ENCODE measurements at regions of chr4 and their contacts with region 1.

Region 1: GRCh38 chr4:53592686-53593501 is 1.6 kb upstream of the LNX1 start:
- DNase-seq: no peak
- H3K4me3 ChIP-seq: no peak overlapping the region
- H3K27ac ChIP-seq: no peak overlapping the region
- H3K4me1 ChIP-seq: no peaks in the 10 kb centered on the region
- H3K27me3 ChIP-seq: no peaks in the 10 kb centered on the region

Region 2: GRCh38 chr4:54233277-54233696 is 640.4 kb after region 1 on chr4:
- in situ Hi-C with region 1: loop called (anchors 25 kb)
- DNase-seq: peak; percentile 95
- H3K4me3 ChIP-seq: peak overlapping the region; percentile 85
- H3K27ac ChIP-seq: peak overlapping the region; percentile 87
- H3K4me1 ChIP-seq: peaks cover 25% of the 10 kb centered on the region
- H3K27me3 ChIP-seq: no peaks in the 10 kb centered on the region